ENCODE measurements at regions of chr10 and their contacts with region 1.

Region 1: DNA sequence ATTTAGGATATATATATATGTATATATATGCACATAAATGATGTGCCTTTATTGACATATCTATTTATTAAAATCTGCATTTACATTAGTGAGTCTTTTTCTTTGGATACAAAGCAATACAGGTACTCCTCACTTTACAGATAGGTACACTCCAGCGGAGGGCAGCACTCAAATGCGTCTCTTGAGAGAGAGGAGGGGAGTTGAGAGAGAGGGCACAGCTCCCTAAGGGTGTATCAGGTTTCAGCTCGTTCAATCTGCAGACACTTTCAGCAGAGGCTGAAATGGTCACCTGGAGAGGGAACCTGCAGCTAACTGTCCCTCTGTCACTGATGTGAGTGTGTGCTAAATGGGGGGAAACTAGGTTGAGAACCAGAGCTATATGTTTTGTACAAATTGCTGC is 21.5 kb downstream of the C10orf53 start:
- DNase-seq: no peak
- H3K4me3 ChIP-seq: no peak overlapping the region
- H3K27ac ChIP-seq: no peak overlapping the region
- H3K4me1 ChIP-seq: peaks cover 0 to 7% (median 1%) of the 10 kb centered on the region in 4 experiments; a peak in 3 of 7 replicates
- H3K27me3 ChIP-seq: peaks cover 0 to 17% (median 9%) of the 10 kb centered on the region in 4 experiments; a peak in 5 of 7 replicates
- CTCF ChIP-seq: peak in 2 of 3 experiments; percentile 24 to 39; a peak in 1 of 4 replicates
- EP300 ChIP-seq: no peak
- POLR2A ChIP-seq: no peak
- RAD21 ChIP-seq: peak; percentile 46 to 59

Region 2: GRCh38 chr10:49690698-49691356 is 10.2 kb before region 1 on chr10:
- CTCF ChIA-PET with region 1: interaction called, 10 read pairs
- POLR2A ChIA-PET with region 1: no interaction called
- DNase-seq: no peak
- H3K4me3 ChIP-seq: peak overlapping the region in 1 of 4 experiments; percentile 51; a peak in 4 of 8 replicates
- H3K27ac ChIP-seq: no peak overlapping the region
- H3K4me1 ChIP-seq: peaks cover 22 to 36% (median 25%) of the 10 kb centered on the region in 4 experiments
- H3K27me3 ChIP-seq: peaks cover 52 to 69% (median 66%) of the 10 kb centered on the region in 4 experiments
- CTCF ChIP-seq: no peak
- EP300 ChIP-seq: no peak
- POLR2A ChIP-seq: no peak
- RAD21 ChIP-seq: no peak

Region 3: GRCh38 chr10:49711516-49711915 is 10.5 kb after region 1 on chr10:
- CTCF ChIA-PET with region 1: interaction called, 11 read pairs
- POLR2A ChIA-PET with region 1: no interaction called
- DNase-seq: no peak
- H3K4me3 ChIP-seq: no peak overlapping the region
- H3K27ac ChIP-seq: no peak overlapping the region
- H3K4me1 ChIP-seq: no peaks in the 10 kb centered on the region
- H3K27me3 ChIP-seq: no peaks in the 10 kb centered on the region; a peak in 1 of 7 replicates
- CTCF ChIP-seq: no peak
- EP300 ChIP-seq: no peak
- POLR2A ChIP-seq: no peak
- RAD21 ChIP-seq: no peak

Region 4: DNA sequence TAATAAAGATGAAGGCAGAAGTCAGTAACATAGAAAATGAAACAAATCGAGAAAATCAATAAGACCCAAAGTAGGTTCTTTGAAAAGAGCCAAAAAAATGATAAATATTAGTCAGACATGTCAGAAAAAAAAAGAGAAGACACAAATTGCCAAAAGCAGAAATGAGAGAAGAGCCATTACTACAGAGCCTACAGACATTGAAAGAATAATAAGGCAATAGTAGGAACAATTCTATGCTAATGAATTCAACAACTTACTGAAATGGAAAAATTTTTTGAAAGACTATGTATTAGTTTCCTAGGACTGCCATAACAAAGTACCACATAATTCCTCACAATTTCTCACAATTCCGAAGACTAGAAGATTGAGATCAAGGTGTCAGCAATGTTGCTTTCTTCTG is 25.6 kb after region 1 on chr10:
- CTCF ChIA-PET with region 1: no interaction called
- POLR2A ChIA-PET with region 1: no interaction called
- DNase-seq: no peak
- H3K4me3 ChIP-seq: no peak overlapping the region
- H3K27ac ChIP-seq: no peak overlapping the region
- H3K4me1 ChIP-seq: no peaks in the 10 kb centered on the region
- H3K27me3 ChIP-seq: no peaks in the 10 kb centered on the region
- CTCF ChIP-seq: no peak
- EP300 ChIP-seq: no peak
- POLR2A ChIP-seq: no peak
- RAD21 ChIP-seq: no peak

Region 5: DNA sequence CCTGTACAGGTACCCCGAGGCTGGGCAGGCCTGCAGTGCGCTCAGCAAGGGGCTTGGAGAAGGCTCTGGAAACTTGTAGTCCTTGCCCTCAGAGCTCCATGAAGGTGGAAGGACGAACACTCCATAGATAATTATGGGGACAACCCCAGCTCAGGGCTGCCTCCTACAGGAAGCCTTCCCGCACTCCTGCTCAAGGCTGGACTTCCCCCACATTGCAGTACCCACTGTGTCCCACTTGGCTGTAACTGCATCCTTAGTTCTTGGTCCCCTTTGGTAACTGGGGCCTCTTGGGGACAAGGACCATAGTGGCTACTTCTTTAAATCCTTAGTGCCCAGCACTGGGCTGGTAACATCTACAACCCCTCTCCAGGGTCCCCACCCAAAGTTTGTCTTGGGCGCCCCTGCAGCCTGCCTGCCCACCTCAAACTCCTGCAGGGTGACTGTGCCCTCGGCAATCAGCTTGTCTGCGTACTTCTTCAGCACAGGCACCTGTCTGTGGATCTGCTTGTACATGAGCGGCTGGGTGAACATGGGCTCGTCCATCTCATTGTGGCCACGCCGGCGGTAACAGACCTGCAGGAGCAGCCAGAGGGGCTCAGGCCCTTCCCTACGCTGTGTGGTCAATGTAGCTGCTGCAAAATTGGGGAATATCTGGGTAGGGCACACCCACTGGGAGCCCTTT is 44.1 kb after region 1 on chr10:
- CTCF ChIA-PET with region 1: interaction called, 13 read pairs
- POLR2A ChIA-PET with region 1: no interaction called
- DNase-seq: no peak
- H3K4me3 ChIP-seq: no peak overlapping the region
- H3K27ac ChIP-seq: no peak overlapping the region
- H3K4me1 ChIP-seq: no peaks in the 10 kb centered on the region
- H3K27me3 ChIP-seq: no peaks in the 10 kb centered on the region
- CTCF ChIP-seq: peak; percentile 74 to 88 (median 82)
- EP300 ChIP-seq: no peak
- POLR2A ChIP-seq: no peak
- RAD21 ChIP-seq: peak; percentile 60 to 68